ENCODE measurements at regions of chr15 and their contacts with region 1.

Region 1: DNA sequence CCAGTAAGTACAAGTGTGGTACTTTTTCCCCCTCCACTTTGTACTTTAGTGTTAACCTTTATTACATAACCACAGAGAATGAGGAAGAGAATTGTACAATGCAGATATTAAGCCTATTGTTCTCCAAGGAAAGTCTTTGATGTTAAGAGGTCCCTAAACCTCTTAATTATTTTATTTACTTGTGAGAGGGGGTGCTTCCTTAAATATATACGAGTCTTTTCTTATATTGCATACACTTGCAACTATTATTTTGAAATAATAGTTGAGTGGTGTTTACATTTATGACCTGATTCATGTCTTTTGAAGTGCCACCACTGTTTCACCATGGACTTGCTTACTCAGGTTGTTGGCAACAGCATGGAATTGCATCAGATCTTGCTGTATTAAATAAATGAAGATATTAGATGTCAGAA is 10.1 kb downstream of the USP3 start:
- DNase-seq: peak in 1 of 9 experiments; percentile 31
- ATAC-seq: no peak
- H3K4me3 ChIP-seq: no peak overlapping the region
- H3K4me3 Mint-ChIP-seq: peak overlapping the region; percentile 26
- H3K27ac ChIP-seq: no peak overlapping the region
- H3K27ac Mint-ChIP-seq: peak overlapping the region; percentile 22
- H3K4me1 ChIP-seq: peaks cover 96% of the 10 kb centered on the region
- H3K4me1 Mint-ChIP-seq: peaks cover 90% of the 10 kb centered on the region
- H3K27me3 ChIP-seq: no peaks in the 10 kb centered on the region
- H3K27me3 Mint-ChIP-seq: no peaks in the 10 kb centered on the region
- CTCF ChIP-seq: no peak

Region 2: DNA sequence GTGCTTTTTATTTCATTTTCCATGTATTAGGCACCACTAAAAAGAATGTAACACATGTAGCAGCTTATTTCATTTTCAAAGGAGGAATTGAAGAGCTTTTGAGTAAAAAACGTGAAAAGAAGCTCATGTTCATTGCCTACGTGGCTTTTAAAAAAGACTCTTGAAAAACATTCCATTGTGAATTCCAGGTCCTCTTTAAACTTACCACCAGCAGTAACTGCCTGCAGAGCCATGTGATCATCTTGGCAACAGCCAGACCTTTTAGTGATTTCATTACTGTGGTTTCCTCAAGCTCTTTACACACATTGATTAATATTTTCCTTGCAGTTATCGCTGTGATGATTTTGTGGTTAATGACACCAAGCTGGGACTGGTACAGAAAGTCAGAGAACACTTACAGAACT is 38.9 kb after region 1 on chr15:
- CTCF ChIA-PET with region 1: interaction called, 3 read pairs
- POLR2A ChIA-PET with region 1: no interaction called
- intact Hi-C with region 1: loop called in 1 of 2 experiments (anchors 5 kb)
- DNase-seq: peak in 1 of 9 experiments; percentile 35
- ATAC-seq: no peak
- H3K4me3 ChIP-seq: no peak overlapping the region
- H3K4me3 Mint-ChIP-seq: no peak overlapping the region
- H3K27ac ChIP-seq: peak overlapping the region in 1 of 2 experiments; percentile 22
- H3K27ac Mint-ChIP-seq: no peak overlapping the region
- H3K4me1 ChIP-seq: peaks cover 6% of the 10 kb centered on the region
- H3K4me1 Mint-ChIP-seq: peaks cover 46% of the 10 kb centered on the region
- H3K27me3 ChIP-seq: no peaks in the 10 kb centered on the region
- H3K27me3 Mint-ChIP-seq: no peaks in the 10 kb centered on the region
- CTCF ChIP-seq: no peak

Region 3: GRCh38 chr15:63582718-63583426 is 68.3 kb after region 1 on chr15:
- CTCF ChIA-PET with region 1: no interaction called
- POLR2A ChIA-PET with region 1: no interaction called
- intact Hi-C with region 1: no loop called
- DNase-seq: no peak
- ATAC-seq: no peak
- H3K4me3 ChIP-seq: no peak overlapping the region
- H3K4me3 Mint-ChIP-seq: no peak overlapping the region
- H3K27ac ChIP-seq: no peak overlapping the region
- H3K27ac Mint-ChIP-seq: peak overlapping the region; percentile 63
- H3K4me1 ChIP-seq: no peaks in the 10 kb centered on the region
- H3K4me1 Mint-ChIP-seq: peaks cover 11% of the 10 kb centered on the region
- H3K27me3 ChIP-seq: no peaks in the 10 kb centered on the region
- H3K27me3 Mint-ChIP-seq: no peaks in the 10 kb centered on the region
- CTCF ChIP-seq: no peak